ENCODE measurements at regions of chr15 and their contacts with region 1.

Region 1: GRCh38 chr15:27491666-27492621 is 521.0 kb downstream of the GABRG3 start:
- DNase-seq: no peak
- ATAC-seq: peak; percentile 73

Region 2: DNA sequence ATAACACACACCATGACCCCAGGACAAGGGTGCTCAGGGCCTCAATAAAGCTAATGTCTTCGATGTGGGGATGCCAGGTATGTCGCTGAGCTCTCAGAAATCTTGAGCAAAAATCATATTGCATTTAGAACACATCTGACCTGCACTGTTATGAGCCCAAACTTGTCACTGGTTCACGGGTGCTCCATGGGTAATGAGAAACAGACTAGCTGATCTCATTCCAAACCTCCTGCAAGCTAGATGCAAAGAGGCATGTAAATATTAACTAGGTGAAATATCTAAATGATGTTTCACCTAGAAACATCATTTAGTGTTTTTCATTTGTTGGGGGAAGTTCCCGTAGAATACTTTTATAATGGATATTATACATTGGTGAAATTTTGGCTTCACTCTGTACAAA is 57.8 kb after region 1 on chr15:
- intact Hi-C with region 1: loop called (anchors 10 kb)
- DNase-seq: no peak
- ATAC-seq: no peak